ENCODE measurements at regions of chr6 and their contacts with region 1.

Region 1: DNA sequence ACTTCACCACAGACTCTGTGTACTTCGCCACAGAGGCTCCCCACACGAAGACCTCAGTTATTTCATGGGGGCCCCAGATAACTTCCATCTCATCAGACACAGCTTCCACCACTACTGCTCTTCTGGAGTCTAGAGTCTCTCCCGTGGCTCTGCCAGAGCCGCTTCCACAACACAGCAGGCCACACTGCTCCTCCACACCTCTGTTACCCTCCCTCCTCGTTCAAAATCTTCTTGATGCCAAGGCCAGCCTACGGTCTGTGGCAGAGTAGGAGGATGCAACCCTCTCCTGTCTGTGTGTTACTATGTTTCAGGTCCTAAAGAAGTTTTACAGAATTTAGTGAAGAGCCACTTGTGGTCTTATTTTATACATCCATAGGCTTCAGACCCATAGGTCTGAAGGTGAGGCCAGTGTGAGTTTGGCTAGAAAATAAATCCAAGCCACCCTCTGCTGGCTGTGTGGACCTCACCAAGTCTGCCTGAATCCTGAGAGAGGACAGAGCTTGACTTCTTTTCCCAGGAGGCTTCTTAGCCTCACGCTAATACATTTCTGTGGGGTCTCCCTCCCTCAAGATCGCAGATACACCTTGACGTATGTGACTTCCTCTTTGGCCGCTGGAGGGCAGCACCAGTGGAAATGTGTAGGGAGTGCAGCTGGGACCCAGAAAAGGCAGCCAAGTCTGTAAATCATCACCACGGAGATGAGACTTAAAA is 197.7 kb downstream of the FAXC start:
- DNase-seq: peak; percentile 58
- H3K4me3 ChIP-seq: no peak overlapping the region; a peak in 1 of 4 replicates
- H3K27ac ChIP-seq: no peak overlapping the region
- H3K4me1 ChIP-seq: no peaks in the 10 kb centered on the region; a peak in 1 of 4 replicates
- H3K27me3 ChIP-seq: no peaks in the 10 kb centered on the region
- CTCF ChIP-seq: peak; percentile 78
- EP300 ChIP-seq: no peak
- RAD21 ChIP-seq: peak; percentile 48

Region 2: GRCh38 chr6:99165838-99166237 is 14.0 kb after region 1 on chr6:
- CTCF ChIA-PET with region 1: interaction called, 13 read pairs
- POLR2A ChIA-PET with region 1: no interaction called
- DNase-seq: no peak
- H3K4me3 ChIP-seq: no peak overlapping the region
- H3K27ac ChIP-seq: no peak overlapping the region
- H3K4me1 ChIP-seq: no peaks in the 10 kb centered on the region
- H3K27me3 ChIP-seq: no peaks in the 10 kb centered on the region
- CTCF ChIP-seq: no peak
- EP300 ChIP-seq: no peak
- RAD21 ChIP-seq: no peak

Region 3: DNA sequence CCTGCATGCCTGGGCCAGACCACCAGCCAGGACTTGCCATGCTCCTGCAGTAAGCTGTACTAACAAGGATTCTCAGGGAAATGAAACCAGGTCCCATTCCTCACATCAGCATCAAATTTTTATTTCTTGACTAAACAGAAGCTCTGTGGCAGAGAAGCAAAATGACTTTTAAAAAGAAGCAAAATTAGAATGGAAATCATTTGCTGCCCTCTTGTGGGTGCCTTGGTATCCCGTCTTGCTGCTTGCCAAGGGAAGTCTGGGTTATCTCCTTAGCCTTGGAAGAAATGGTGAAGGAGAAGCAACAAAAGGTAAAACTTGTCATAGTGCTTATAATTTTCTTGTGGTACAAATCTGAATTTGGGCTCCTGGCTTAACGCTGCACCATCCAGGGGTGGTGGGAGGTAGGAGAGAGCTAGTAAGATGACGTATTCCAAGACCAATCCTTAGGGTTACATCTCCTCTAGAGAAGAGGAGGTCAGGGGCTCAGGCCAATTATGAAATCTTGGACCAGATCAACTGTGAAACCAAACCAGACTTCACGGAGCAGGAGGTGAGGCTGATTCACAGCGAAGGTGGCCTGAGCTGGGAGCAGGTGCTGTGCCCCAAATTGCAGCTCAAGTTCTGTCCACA is 90.2 kb after region 1 on chr6:
- CTCF ChIA-PET with region 1: interaction called, 36 read pairs
- POLR2A ChIA-PET with region 1: no interaction called
- DNase-seq: peak; percentile 19
- H3K4me3 ChIP-seq: no peak overlapping the region
- H3K27ac ChIP-seq: no peak overlapping the region
- H3K4me1 ChIP-seq: no peaks in the 10 kb centered on the region
- H3K27me3 ChIP-seq: no peaks in the 10 kb centered on the region
- CTCF ChIP-seq: peak; percentile 58
- EP300 ChIP-seq: no peak
- RAD21 ChIP-seq: peak; percentile 64

Measured in SK-N-SH (cell line).